H1 (cell line): ENCODE measurements at regions of chr2 and their contacts with region 1.

Region 1: DNA sequence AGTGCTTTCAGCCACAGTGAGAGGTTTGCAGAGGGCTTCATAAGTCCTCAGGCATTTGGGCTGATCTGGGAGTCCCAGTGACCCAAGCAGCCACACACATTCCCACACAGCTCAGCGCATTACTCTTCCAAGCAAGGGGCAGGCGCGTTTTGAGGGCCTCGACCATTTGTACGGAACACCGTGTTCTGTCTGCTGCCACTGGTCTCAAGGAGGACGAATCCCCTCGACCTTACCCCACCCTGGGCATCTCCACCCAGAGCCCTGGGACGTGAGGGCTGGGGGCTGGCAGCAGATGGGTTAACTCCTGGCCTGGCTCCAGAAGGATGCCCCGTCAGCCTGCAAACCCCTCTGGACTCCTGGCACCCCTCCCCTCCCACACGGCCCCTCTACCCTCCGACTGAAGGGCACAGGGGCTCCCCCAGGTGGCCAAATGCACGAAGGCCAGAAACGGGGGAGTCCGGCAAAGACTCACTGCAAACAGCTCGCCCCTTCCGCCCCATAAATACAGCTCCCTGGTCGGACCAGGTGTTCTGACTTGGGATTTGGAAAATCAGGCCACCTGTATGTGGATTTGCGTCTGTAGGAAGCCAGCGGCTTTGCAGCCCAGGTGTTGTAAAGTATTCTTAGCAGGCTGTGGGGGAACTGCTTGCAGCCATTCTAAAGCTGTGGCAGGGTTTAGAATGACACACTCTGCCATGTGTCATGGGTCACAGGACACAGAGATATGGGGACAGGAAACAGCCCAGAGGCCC is 33.6 kb upstream of the PTMA start:
- DNase-seq: peak; percentile 78 to 96
- H3K4me3 ChIP-seq: no peak overlapping the region
- H3K27ac ChIP-seq: 0 out of 2 replicates have a peak overlapping the region, but pooled peaks have one; percentile 20
- H3K4me1 ChIP-seq: peaks cover 0 to 39% (median 30%) of the 10 kb centered on the region in 4 experiments; a peak in 6 of 7 replicates
- H3K27me3 ChIP-seq: no peaks in the 10 kb centered on the region
- CTCF ChIP-seq: peak in 2 of 3 experiments; percentile 91 to 94; a peak in 3 of 4 replicates
- EP300 ChIP-seq: peak in 1 of 2 experiments; percentile 23; a peak in 1 of 3 replicates
- POLR2A ChIP-seq: no peak
- RAD21 ChIP-seq: peak; percentile 80 to 89

Region 2: DNA sequence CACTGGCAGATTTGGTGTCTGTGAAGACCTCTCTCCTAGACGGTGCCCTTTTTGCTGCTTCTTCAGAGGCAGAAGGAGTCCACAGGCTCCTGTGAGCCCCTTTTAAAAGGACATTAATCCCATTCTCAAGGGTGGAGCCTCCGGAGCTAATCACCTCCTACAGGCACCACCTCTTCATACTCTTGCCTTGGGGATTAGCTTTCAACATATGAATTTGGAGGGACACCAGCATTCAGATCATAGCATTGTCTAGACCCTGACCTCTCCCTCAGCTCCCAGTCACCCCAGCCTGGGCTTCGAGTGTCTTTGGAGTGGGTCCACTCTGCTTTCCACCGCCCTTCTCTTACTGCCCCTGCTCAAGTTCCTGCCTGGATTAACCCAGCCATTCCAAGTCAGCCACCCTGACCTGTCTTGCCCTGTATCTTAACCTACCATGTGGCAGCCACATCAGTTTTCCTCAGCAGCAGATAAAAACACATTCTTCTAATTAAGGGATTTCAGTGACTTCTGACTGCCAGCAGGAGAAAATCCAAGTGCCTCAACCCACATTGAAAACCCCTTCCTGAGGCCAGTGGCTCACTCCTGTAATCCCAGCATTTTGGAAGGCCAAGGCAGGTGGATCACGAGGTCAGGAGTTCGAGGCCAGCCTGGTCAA is 204.4 kb before region 1 on chr2:
- CTCF ChIA-PET with region 1: no interaction called
- POLR2A ChIA-PET with region 1: no interaction called
- DNase-seq: no peak
- H3K4me3 ChIP-seq: no peak overlapping the region
- H3K27ac ChIP-seq: no peak overlapping the region
- H3K4me1 ChIP-seq: peaks cover 0 to 3% (median 2%) of the 10 kb centered on the region in 4 experiments; a peak in 3 of 7 replicates
- H3K27me3 ChIP-seq: no peaks in the 10 kb centered on the region
- CTCF ChIP-seq: no peak
- EP300 ChIP-seq: no peak
- POLR2A ChIP-seq: no peak
- RAD21 ChIP-seq: no peak

Region 3: GRCh38 chr2:231557571-231558237 is 117.1 kb before region 1 on chr2:
- CTCF ChIA-PET with region 1: interaction called, 66 read pairs
- POLR2A ChIA-PET with region 1: no interaction called
- DNase-seq: peak; percentile 50 to 60
- H3K4me3 ChIP-seq: no peak overlapping the region
- H3K27ac ChIP-seq: no peak overlapping the region
- H3K4me1 ChIP-seq: no peaks in the 10 kb centered on the region; a peak in 1 of 7 replicates
- H3K27me3 ChIP-seq: no peaks in the 10 kb centered on the region; a peak in 1 of 7 replicates
- CTCF ChIP-seq: peak; percentile 51 to 88 (median 86)
- EP300 ChIP-seq: no peak
- POLR2A ChIP-seq: no peak
- RAD21 ChIP-seq: peak; percentile 75 to 83

Region 4: GRCh38 chr2:231612179-231613053 is 62.3 kb before region 1 on chr2:
- CTCF ChIA-PET with region 1: interaction called, 513 read pairs
- POLR2A ChIA-PET with region 1: interaction called, 223 read pairs
- DNase-seq: peak in 1 of 2 experiments; percentile 95
- H3K4me3 ChIP-seq: peak overlapping the region in 1 of 4 experiments; percentile 68; a peak in 2 of 8 replicates
- H3K27ac ChIP-seq: peak overlapping the region; percentile 89
- H3K4me1 ChIP-seq: peaks cover 6 to 33% (median 32%) of the 10 kb centered on the region in 4 experiments
- H3K27me3 ChIP-seq: no peaks in the 10 kb centered on the region
- CTCF ChIP-seq: peak in 2 of 3 experiments; percentile 83 to 87; a peak in 3 of 4 replicates
- EP300 ChIP-seq: 0 out of 3 replicates have a peak, but pooled peaks of 1 of the 2 experiments have one; percentile 77
- POLR2A ChIP-seq: peak in 1 of 2 experiments; percentile 64; a peak in 2 of 3 replicates
- RAD21 ChIP-seq: peak; percentile 90 to 95

Region 5: GRCh38 chr2:231642631-231643494 is 31.9 kb before region 1 on chr2:
- CTCF ChIA-PET with region 1: interaction called, 163 read pairs
- POLR2A ChIA-PET with region 1: interaction called, 28 read pairs
- DNase-seq: no peak
- H3K4me3 ChIP-seq: no peak overlapping the region
- H3K27ac ChIP-seq: no peak overlapping the region
- H3K4me1 ChIP-seq: peaks cover 3 to 9% (median 3%) of the 10 kb centered on the region in 4 experiments; a peak in 5 of 7 replicates
- H3K27me3 ChIP-seq: no peaks in the 10 kb centered on the region
- CTCF ChIP-seq: no peak
- EP300 ChIP-seq: no peak
- POLR2A ChIP-seq: no peak
- RAD21 ChIP-seq: no peak

Region 6: GRCh38 chr2:231662028-231662810 is 12.5 kb before region 1 on chr2:
- CTCF ChIA-PET with region 1: interaction called, 148 read pairs
- POLR2A ChIA-PET with region 1: interaction called, 100 read pairs
- DNase-seq: peak; percentile 97 to 98
- H3K4me3 ChIP-seq: peak overlapping the region; percentile 14 to 54 (median 24); a peak in 6 of 8 replicates
- H3K27ac ChIP-seq: peak overlapping the region; percentile 95
- H3K4me1 ChIP-seq: peaks cover 0 to 26% (median 10%) of the 10 kb centered on the region in 4 experiments; a peak in 6 of 7 replicates
- H3K27me3 ChIP-seq: peaks cover 0 to 10% (median 3%) of the 10 kb centered on the region in 4 experiments; a peak in 5 of 7 replicates
- CTCF ChIP-seq: 0 out of 4 replicates have a peak, but pooled peaks of 1 of the 3 experiments have one; percentile 5
- EP300 ChIP-seq: peak; percentile 42 to 63; a peak in 1 of 3 replicates
- POLR2A ChIP-seq: peak in 1 of 2 experiments; percentile 79; a peak in 2 of 3 replicates
- RAD21 ChIP-seq: peak in 1 of 2 experiments; percentile 15; a peak in 1 of 4 replicates

Region 7: GRCh38 chr2:231706731-231707624 is 32.2 kb after region 1 on chr2:
- CTCF ChIA-PET with region 1: interaction called, 555 read pairs
- POLR2A ChIA-PET with region 1: interaction called, 1,080 read pairs
- DNase-seq: peak; percentile 96 to 98
- H3K4me3 ChIP-seq: peak overlapping the region; percentile 85 to 96 (median 90)
- H3K27ac ChIP-seq: peak overlapping the region; percentile 99
- H3K4me1 ChIP-seq: peaks cover 0 to 14% (median 8%) of the 10 kb centered on the region in 4 experiments; a peak in 6 of 7 replicates
- H3K27me3 ChIP-seq: no peaks in the 10 kb centered on the region
- CTCF ChIP-seq: peak in 2 of 3 experiments; percentile 72 to 98; a peak in 3 of 4 replicates
- EP300 ChIP-seq: no peak
- POLR2A ChIP-seq: peak in 1 of 2 experiments; percentile 96; a peak in 2 of 3 replicates
- RAD21 ChIP-seq: no peak; a peak in 1 of 4 replicates

Region 8: DNA sequence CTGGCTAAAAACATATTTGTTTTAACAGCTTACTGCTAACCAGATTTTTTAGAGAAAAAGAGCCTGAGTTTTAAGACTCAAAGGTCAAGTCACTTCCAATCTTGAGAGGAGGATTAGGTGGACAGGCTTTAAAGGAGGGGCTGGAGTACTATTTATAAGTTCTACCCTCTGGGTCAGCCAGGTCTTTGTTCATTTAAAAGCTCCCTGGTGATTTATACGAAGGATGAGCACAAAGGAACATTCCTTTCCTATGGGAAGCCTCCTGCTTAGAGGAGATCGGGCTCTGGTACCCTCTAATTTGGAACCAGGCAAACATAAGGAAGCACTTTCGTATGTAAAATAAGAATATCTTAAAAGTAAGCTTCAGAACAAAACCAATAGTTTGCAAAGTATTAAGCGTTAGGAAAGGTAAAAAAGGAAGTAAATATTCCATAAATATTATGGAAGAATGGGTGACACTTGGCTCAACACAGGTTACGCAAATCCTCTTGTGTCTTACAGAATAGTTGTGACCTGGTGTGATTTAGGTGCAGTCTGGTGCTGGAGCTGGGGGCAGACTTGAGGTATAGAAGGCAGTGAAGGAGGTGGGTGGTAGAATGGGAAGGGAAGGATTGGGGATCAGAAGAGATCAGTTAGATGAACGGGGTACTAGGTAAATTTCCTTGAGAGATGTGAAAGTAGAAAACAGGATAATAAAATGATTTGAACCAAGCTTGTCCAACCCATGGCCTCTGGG is 70.7 kb after region 1 on chr2:
- CTCF ChIA-PET with region 1: interaction called, 11 read pairs
- POLR2A ChIA-PET with region 1: interaction called, 3 read pairs
- DNase-seq: peak in 1 of 2 experiments; percentile 3
- H3K4me3 ChIP-seq: peak overlapping the region in 1 of 4 experiments; percentile 31; a peak in 1 of 8 replicates
- H3K27ac ChIP-seq: no peak overlapping the region
- H3K4me1 ChIP-seq: peaks cover 4 to 11% (median 7%) of the 10 kb centered on the region in 4 experiments; a peak in 4 of 7 replicates
- H3K27me3 ChIP-seq: no peaks in the 10 kb centered on the region
- CTCF ChIP-seq: no peak
- EP300 ChIP-seq: no peak
- POLR2A ChIP-seq: no peak
- RAD21 ChIP-seq: no peak

Region 9: GRCh38 chr2:231935207-231935524 is 260.4 kb after region 1 on chr2:
- CTCF ChIA-PET with region 1: no interaction called
- POLR2A ChIA-PET with region 1: no interaction called
- DNase-seq: no peak
- H3K4me3 ChIP-seq: no peak overlapping the region
- H3K27ac ChIP-seq: no peak overlapping the region
- H3K4me1 ChIP-seq: no peaks in the 10 kb centered on the region
- H3K27me3 ChIP-seq: no peaks in the 10 kb centered on the region; a peak in 1 of 7 replicates
- CTCF ChIP-seq: no peak
- EP300 ChIP-seq: no peak
- POLR2A ChIP-seq: no peak
- RAD21 ChIP-seq: no peak